Activated B cell treated with CpG ODN at 0.5 μM for 24 hours (primary cell): ENCODE measurements at regions of chr15 and their contacts with region 1.

Region 1: DNA sequence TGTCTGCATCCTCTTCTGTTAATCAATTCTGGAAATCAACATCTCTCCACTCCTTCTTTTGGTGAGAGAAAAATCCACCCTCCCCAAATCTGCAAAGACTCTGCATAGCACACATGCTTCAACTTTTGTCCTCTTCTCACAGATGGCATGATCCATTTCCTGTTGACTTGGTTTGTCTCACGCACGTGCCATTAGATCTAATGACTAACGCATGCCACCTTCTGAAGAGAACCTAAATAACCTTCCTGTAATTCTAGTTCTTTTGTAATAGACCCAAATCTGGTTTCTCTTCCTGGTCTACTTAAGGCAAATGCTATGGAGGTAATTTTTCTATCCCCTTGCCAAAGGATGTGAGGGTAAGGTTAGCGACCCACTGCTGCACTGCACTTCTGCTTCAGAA is 51.0 kb upstream of the ATOSA start:
- DNase-seq: no peak
- ATAC-seq: peak; percentile 91
- H3K4me3 Mint-ChIP-seq: peak overlapping the region; percentile 39
- H3K27ac Mint-ChIP-seq: peak overlapping the region; percentile 89
- H3K4me1 Mint-ChIP-seq: peaks cover 40% of the 10 kb centered on the region
- H3K27me3 Mint-ChIP-seq: no peaks in the 10 kb centered on the region
- CTCF ChIP-seq: no peak

Region 2: GRCh38 chr15:52552303-52552702 is 177.9 kb before region 1 on chr15:
- CTCF ChIA-PET with region 1: no interaction called
- POLR2A ChIA-PET with region 1: interaction called, 14 read pairs
- intact Hi-C with region 1: no loop called
- DNase-seq: no peak
- ATAC-seq: no peak
- H3K4me3 Mint-ChIP-seq: no peak overlapping the region
- H3K27ac Mint-ChIP-seq: no peak overlapping the region
- H3K4me1 Mint-ChIP-seq: peaks cover 16% of the 10 kb centered on the region
- H3K27me3 Mint-ChIP-seq: no peaks in the 10 kb centered on the region
- CTCF ChIP-seq: no peak

Region 3: DNA sequence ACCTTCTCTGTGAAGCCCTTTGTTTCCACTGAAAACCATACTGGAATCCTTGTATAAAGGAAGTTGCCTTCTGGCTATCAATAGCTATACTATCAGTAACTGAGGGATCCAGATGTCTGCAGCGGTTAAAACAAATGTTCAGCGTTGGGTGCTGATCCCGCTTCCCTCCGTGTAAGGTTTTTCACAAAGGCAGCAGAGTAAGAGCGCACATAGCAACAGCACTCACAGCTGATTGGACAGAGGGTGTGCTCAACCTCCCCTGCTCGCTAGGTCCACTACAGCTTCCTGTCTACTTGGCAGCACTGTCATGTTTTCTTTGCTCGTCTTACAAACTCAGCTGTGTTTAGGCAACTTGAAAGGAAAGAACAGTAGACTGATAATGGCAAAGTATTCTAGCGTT is 78.3 kb before region 1 on chr15:
- CTCF ChIA-PET with region 1: interaction called, 6 read pairs
- POLR2A ChIA-PET with region 1: interaction called, 8 read pairs
- intact Hi-C with region 1: loop called (anchors 1 kb)
- DNase-seq: no peak
- ATAC-seq: peak; percentile 100
- H3K4me3 Mint-ChIP-seq: peak overlapping the region; percentile 38
- H3K27ac Mint-ChIP-seq: peak overlapping the region; percentile 46
- H3K4me1 Mint-ChIP-seq: peaks cover 13% of the 10 kb centered on the region
- H3K27me3 Mint-ChIP-seq: no peaks in the 10 kb centered on the region
- CTCF ChIP-seq: no peak

Region 4: DNA sequence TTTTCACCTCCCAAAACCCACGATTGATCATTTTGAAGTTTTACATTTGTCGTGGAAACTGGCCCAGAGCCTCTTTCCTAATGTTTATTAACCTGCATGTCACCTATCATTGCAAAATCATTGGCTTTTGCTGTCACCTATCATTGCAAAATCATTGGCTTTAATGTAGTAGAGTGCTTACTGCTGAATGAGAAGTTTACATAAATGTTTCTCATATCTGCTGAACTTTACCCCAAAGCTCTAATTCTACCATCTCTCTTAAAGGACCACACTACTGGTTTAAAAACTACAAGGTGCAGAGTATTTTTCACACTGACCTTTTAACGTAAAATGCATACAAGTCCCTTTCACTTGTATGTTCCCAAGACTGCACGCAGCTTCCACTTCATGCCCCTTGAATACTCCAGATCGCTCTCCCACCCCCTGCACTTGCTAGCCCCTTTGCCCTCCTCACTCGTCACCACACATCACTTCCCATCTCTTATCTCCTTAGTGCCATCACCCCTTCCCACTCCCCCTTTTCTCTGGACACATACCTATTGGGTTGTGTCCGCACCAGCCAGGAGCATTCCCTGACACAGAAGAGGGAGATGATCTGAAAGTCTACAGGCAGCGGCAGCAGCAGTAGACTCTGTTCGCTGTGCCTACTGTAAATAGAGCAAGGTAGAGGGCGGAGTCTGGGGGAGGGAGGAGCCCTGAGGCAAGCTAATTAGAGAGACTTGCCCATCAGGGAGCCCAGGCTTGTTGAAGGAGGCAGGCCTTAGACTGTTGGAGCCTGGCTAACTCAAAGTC is 20.8 kb before region 1 on chr15:
- CTCF ChIA-PET with region 1: interaction called, 6 read pairs
- POLR2A ChIA-PET with region 1: no interaction called
- intact Hi-C with region 1: loop called (anchors 2 kb)
- DNase-seq: peak; percentile 47
- ATAC-seq: peak; percentile 99
- H3K4me3 Mint-ChIP-seq: peak overlapping the region; percentile 88
- H3K27ac Mint-ChIP-seq: peak overlapping the region; percentile 91
- H3K4me1 Mint-ChIP-seq: peaks cover 53% of the 10 kb centered on the region
- H3K27me3 Mint-ChIP-seq: no peaks in the 10 kb centered on the region
- CTCF ChIP-seq: no peak

Region 5: DNA sequence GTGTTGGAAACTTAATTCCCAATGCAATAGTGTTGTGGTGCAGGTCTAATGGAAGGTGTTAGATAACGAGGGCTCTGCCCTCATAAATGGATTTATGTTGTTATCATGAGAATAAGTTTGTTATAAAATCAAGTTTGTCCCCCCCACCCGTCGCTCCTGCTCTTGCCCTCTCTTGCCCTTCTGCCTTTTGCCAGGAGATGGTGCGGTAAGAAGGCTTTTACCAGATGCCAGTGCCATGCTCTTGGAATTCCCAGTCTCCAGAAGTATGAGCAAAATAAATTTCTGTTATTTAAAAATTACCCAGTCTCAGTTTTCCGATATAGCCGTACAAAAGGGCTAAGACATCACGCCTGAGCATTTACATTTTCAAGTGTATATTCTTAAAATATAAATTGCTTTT is 82.6 kb after region 1 on chr15:
- CTCF ChIA-PET with region 1: no interaction called
- POLR2A ChIA-PET with region 1: no interaction called
- intact Hi-C with region 1: no loop called
- DNase-seq: no peak
- ATAC-seq: no peak
- H3K4me3 Mint-ChIP-seq: no peak overlapping the region
- H3K27ac Mint-ChIP-seq: no peak overlapping the region
- H3K4me1 Mint-ChIP-seq: no peaks in the 10 kb centered on the region
- H3K27me3 Mint-ChIP-seq: peaks cover 49% of the 10 kb centered on the region
- CTCF ChIP-seq: no peak

Region 6: DNA sequence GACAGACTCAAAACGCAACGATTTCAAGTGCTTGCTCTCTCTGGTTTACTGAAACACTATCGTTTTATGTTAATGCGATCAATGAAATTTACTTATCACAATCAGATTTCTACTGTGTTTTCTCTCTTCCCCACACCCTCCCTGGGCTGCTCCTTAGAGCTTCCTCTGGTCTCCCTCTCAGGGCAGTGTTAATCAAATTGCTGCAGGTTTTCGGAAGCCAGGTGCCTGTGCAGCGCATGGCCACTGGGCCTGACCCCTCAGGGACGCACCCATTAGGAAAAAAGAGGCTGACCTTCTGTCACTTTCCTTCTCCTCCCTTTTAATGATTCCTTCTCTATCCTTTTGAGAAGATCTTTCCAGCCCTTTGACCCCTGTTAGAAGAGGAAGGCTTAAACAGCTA is 194.5 kb after region 1 on chr15:
- CTCF ChIA-PET with region 1: no interaction called
- POLR2A ChIA-PET with region 1: no interaction called
- intact Hi-C with region 1: no loop called
- DNase-seq: no peak
- ATAC-seq: no peak
- H3K4me3 Mint-ChIP-seq: no peak overlapping the region
- H3K27ac Mint-ChIP-seq: no peak overlapping the region
- H3K4me1 Mint-ChIP-seq: no peaks in the 10 kb centered on the region
- H3K27me3 Mint-ChIP-seq: peaks cover 4% of the 10 kb centered on the region
- CTCF ChIP-seq: no peak